Activated T-helper 1 cell treated with anti-CD3 and anti-CD28 coated beads, Interleukin-12 subunit alpha, Interleukin-12 subunit beta, Interleukin-2, Interleukin-4 antibody, amounts not matched to agents 30 ng/mL and 10 ng/mL and 1 ng/mL, durations not matched to agents 14 hours and 24 hours and 36 hours (primary cell): ENCODE measurements at regions of chr2 and their contacts with region 1.

Region 1: GRCh38 chr2:231612179-231613053 is 19.8 kb downstream of the TEX44 start:
- DNase-seq: peak; percentile 87
- H3K4me3 Mint-ChIP-seq: peak overlapping the region; percentile 80
- H3K27ac Mint-ChIP-seq: peak overlapping the region; percentile 97
- H3K4me1 Mint-ChIP-seq: peaks cover 65% of the 10 kb centered on the region
- H3K27me3 Mint-ChIP-seq: no peaks in the 10 kb centered on the region

Region 2: DNA sequence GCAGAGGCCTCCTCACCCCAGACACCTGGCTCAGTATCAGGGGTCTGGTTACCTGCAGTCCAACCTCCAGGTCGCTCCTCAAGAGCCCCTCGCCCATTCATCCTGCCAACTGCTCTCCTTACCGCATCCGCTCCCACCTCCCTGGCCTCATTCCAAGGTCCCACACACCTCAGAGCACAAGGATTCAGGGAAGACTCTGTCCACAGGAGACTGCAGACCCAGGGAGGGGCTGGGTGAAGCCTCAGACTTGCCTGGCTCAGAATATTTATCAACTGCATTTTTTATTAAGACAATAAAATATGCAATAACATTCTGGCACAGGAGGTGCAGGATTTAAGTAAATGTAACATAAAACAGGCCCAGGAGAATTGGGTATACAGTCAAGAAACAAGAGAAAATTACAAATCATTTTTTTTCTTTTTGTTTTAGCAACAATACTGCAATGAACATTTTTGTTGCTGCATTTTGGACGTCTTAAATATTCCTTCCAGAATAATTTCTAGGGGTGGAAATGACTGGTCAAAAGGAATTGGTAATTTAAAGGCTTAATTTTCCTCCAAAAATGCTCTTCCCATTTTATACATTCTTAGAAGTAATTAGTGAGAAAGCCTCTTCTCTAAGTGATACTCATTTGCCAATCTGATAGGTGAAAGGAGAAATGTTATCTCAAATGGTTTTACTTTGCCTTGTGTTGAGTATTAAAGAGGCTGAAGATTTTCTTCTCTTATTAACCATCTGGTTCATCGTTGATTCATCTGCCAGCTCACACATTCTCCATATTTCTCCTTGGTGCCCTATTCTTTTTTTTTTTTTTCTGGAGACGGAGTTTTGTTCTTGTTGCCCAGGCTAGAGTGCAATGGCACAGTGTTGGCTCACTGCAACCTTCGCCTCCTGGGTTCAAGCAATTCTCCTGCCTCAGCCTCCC is 22.8 kb after region 1 on chr2:
- intact Hi-C with region 1: no loop called
- DNase-seq: no peak
- H3K4me3 Mint-ChIP-seq: no peak overlapping the region
- H3K27ac Mint-ChIP-seq: no peak overlapping the region
- H3K4me1 Mint-ChIP-seq: peaks cover 9% of the 10 kb centered on the region
- H3K27me3 Mint-ChIP-seq: no peaks in the 10 kb centered on the region

Region 3: DNA sequence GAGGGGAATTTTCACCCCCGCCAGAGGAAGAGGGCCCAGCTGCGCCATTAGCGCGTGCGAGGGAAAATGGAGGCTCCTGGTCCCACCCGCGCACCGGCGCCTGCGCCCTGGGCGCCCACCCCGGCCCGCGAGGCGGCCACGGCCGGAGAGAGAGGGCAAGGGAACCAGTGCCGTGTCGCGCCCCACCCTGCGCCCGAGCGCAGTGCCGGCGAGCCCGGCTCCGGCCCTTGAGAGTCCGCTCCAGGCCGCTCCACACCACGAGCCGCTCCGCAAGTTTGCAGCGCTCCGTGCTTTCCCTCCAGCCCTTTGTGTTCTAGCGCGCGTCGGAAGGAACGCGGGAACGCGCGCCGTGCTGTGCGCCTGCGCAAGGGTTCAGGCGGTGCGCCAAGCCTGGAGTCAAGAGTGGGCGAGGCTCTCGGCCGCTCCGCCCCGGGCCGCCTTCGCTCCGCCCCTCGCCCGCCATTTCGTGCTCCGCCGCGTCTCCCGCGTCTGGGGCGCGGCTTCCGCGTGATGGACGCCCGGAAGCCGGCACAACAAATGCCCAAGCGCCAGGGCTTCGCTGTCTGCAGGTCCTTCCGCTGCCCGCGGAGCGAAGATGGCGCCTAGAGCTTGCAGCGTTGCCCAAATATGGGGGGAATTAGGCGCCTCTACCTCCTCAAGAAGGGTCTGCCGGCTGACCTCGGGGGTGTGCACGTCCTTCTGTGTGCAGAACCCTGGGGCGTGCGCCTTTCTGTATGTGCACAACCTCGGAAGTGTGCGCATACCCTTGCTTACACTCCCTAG is 49.8 kb after region 1 on chr2:
- intact Hi-C with region 1: loop called (anchors 1 kb)
- DNase-seq: peak; percentile 98
- H3K4me3 Mint-ChIP-seq: peak overlapping the region; percentile 74
- H3K27ac Mint-ChIP-seq: peak overlapping the region; percentile 96
- H3K4me1 Mint-ChIP-seq: peaks cover 25% of the 10 kb centered on the region
- H3K27me3 Mint-ChIP-seq: no peaks in the 10 kb centered on the region

Region 4: DNA sequence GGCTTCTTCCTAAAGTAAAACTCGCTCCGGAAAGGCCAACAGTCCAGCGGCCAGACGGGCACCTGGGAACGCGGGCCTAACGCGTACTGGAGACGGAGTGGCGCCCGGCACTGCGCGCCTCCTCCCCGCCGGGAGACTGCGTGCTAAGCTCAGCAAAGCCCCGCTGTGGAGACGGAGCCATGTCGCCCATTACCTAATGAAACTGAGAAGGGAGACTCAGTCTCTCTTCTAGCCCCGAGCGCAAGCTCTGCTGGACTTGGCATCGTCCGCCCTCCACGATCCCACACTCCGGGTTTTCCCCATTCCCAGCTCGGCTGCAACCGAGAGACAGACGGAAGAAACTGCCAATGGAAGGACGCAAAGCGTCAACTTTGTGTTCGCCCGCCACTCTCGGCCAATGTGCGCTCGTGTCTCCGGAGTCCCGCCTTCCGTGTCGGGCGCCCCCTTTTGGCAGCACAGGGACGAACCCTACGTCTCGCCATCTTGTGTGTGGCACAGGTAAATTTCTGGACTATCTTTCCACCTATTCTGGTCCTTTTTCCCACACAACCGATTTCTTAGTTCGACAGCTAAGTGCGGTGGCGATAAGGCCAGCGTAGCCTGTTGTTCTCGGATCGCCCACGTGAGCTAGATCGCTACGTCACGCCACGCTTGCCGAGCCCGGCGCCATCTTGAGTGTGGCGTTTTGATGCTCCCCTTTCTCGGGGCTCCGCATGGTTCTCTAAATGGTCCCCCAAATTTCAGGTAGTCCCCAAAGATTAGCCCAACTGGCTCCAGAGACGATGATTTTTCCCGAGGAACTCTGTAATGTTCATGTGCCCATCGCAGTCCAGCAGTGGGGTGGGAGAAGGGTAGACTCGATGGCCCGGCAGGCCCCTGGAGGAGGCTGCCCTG is 94.6 kb after region 1 on chr2:
- intact Hi-C with region 1: loop called (anchors 1 kb)
- DNase-seq: peak; percentile 96
- H3K4me3 Mint-ChIP-seq: peak overlapping the region; percentile 99
- H3K27ac Mint-ChIP-seq: peak overlapping the region; percentile 100
- H3K4me1 Mint-ChIP-seq: peaks cover 13% of the 10 kb centered on the region
- H3K27me3 Mint-ChIP-seq: peaks cover 3% of the 10 kb centered on the region

Region 5: GRCh38 chr2:231780909-231781797 is 168.7 kb after region 1 on chr2 and contains the start of gene PDE6D:
- intact Hi-C with region 1: loop called (anchors 1 kb)
- DNase-seq: peak; percentile 98
- H3K4me3 Mint-ChIP-seq: peak within 1 kb of the TSS; percentile 93
- H3K27ac Mint-ChIP-seq: peak within 1 kb of the TSS; percentile 94
- H3K4me1 Mint-ChIP-seq: peaks cover 56% of the 10 kb centered on the region
- H3K27me3 Mint-ChIP-seq: no peaks in the 10 kb centered on the region
- total RNA-seq, gene PDE6D: 31.0 and 31.9 TPM in 2 replicates

Region 6: GRCh38 chr2:232550354-232551249 is 938.2 kb after region 1 on chr2 and contains the starts of genes EIF4E2 and TIGD1:
- intact Hi-C with region 1: loop called (anchors 5 kb)
- DNase-seq: peak; percentile 90
- H3K4me3 Mint-ChIP-seq: peak within 1 kb of the TSS; percentile 100
- H3K27ac Mint-ChIP-seq: peak within 1 kb of the TSS; percentile 100
- H3K4me1 Mint-ChIP-seq: peaks cover 76% of the 10 kb centered on the region
- H3K27me3 Mint-ChIP-seq: no peaks in the 10 kb centered on the region
- total RNA-seq, gene EIF4E2: 94.3 and 96.2 TPM in 2 replicates
- total RNA-seq, gene TIGD1: 8.4 and 8.9 TPM in 2 replicates